CD14-positive monocyte (primary cell): ENCODE measurements at regions of chr16 and their contacts with region 1.

Region 1: DNA sequence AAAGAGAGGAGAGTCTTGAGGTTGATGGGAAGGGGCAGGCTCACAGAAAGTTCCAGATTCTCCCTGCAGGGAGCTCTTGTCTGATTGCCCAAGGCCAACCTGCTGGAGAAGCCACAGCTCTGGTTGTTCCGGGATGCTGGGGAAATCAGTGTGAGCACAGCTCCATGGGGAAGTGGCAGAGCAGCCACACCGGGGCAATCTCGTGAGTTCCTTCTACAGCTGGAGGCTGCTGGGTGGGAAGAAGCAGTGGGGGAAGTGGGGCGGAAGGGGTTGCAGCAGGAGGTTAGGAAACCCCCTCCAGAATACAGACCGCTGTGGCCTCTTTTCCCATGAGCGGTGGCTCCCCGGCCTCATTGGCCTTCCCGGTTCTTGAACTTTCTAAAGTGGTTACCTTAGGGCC is 34.0 kb downstream of the KIAA0513 start:
- DNase-seq: peak; percentile 89 to 97 (median 96)
- H3K4me3 ChIP-seq: peak overlapping the region in 1 of 3 experiments; percentile 55
- H3K4me3 Mint-ChIP-seq: peak overlapping the region; percentile 61 to 82
- H3K27ac ChIP-seq: peak overlapping the region; percentile 89 to 96
- H3K27ac Mint-ChIP-seq: peak overlapping the region; percentile 94 to 99 (median 98)
- H3K4me1 ChIP-seq: peaks cover 58 to 68% of the 10 kb centered on the region in 2 donors
- H3K4me1 Mint-ChIP-seq: peaks cover 65% of the 10 kb centered on the region
- H3K27me3 ChIP-seq: no peaks in the 10 kb centered on the region
- H3K27me3 Mint-ChIP-seq: no peaks in the 10 kb centered on the region
- CTCF ChIP-seq: no peak

Region 2: GRCh38 chr16:85046931-85047866 is 14.4 kb before region 1 on chr16:
- intact Hi-C with region 1: loop called in 1 of 2 experiments (anchors 2 kb)
- DNase-seq: no peak
- H3K4me3 ChIP-seq: peak overlapping the region in 1 of 3 experiments; percentile 43
- H3K4me3 Mint-ChIP-seq: peak overlapping the region; percentile 37 to 76
- H3K27ac ChIP-seq: peak overlapping the region; percentile 45 to 74
- H3K27ac Mint-ChIP-seq: peak overlapping the region; percentile 60 to 92 (median 84)
- H3K4me1 ChIP-seq: peaks cover 55 to 68% of the 10 kb centered on the region in 2 donors
- H3K4me1 Mint-ChIP-seq: peaks cover 62% of the 10 kb centered on the region
- H3K27me3 ChIP-seq: no peaks in the 10 kb centered on the region
- H3K27me3 Mint-ChIP-seq: peaks cover 0 to 7% (median 2%) of the 10 kb centered on the region in 3 donors
- CTCF ChIP-seq: no peak